CD4-positive, alpha-beta T cell (primary cell): ENCODE measurements at regions of chr19 and their contacts with region 1.

Region 1: DNA sequence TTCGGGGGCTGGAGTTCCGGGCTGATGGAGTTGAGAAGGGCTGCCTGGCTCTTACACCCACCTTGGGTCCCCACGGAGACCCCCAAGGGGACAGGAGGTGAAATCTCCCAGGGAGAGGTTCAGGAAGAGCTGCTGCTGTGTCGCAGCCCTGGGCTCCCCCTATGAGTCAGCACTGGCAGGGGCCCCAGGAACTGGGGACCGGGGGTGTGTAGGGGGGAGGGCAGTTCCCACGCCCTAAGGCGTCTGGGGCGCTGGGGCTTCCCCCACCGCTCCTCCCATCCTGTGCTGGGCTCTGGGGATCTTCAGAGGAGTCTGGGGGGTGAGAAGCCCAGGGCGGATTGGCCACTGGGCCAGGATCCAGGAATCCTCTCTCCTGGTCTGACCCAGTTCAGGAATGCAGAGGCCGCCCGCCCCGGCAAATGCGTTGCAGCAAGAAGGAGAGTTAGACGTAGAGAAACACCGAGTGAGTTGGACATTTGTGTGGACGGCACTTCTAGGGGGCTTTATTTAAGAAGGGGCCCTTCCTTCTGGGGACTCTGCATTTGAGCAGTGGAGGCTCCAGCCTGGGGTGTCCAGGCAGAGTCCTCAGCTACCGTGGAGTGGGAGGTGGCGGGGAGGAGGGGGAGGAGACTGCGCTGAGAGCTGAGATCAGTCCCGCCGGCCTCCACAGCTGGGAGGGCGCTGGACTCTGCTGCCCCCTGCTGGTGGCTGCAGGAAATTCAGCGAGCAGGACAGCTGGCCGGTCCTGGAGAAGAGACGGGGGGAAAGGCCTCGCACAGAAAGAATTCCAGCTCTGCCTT is 15.0 kb upstream of the NANOS3 start:
- DNase-seq: peak; percentile 81 to 96 (median 86)
- ATAC-seq: peak; percentile 84
- H3K4me3 ChIP-seq: peak overlapping the region; percentile 73
- H3K4me3 Mint-ChIP-seq: peak overlapping the region; percentile 94
- H3K27ac ChIP-seq: peak overlapping the region; percentile 84 to 94
- H3K27ac Mint-ChIP-seq: peak overlapping the region; percentile 86
- H3K4me1 ChIP-seq: peaks cover 42% of the 10 kb centered on the region
- H3K4me1 Mint-ChIP-seq: peaks cover 41% of the 10 kb centered on the region
- H3K27me3 ChIP-seq: peaks cover 22 to 25% of the 10 kb centered on the region in 2 experiments
- H3K27me3 Mint-ChIP-seq: peaks cover 30% of the 10 kb centered on the region
- CTCF ChIP-seq: peak; percentile 99

Region 2: DNA sequence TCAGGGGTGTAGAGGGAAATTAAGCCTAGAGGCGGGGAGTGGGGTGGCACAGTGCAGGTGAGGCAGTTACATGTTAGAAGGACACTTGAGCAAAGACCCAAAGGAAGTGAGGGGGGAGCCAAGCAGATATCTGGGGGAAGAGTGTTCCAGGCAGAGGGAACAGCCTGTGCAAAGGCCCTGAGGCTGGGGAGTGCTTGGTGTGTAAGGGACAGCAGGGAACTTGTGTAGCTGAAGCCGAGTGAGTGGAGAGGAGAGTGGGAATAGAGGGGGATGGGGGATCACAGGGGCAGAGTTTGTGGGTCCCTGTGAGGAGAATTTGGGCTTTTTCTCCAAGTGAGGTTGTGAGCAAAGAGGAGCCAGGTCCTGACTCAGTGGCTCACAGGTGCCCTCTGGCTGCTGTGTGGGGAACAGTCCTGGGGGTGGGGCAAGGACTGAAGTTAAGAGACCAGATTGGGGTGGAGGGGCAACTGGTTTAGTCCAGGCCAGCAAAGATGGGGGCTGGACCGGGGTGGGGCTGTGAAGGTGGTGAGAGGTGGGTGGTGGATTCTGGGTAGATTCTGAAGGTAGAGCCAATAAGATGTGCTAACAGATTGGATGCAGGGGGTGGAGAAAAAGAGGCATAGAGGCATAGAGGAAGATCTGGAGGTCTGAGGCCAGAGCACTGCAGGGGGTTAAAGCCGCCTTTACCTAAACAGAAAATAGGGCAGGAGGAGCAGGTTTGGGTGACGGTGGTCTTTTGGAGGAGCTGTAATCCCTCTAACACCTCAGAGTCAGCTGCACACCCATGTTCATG is 430.9 kb before region 1 on chr19:
- CTCF ChIA-PET with region 1: no interaction called
- POLR2A ChIA-PET with region 1: no interaction called
- intact Hi-C with region 1: loop called in 1 of 2 experiments (anchors 5 kb)
- DNase-seq: peak; percentile 11 to 67 (median 38)
- ATAC-seq: peak; percentile 48
- H3K4me3 ChIP-seq: no peak overlapping the region
- H3K4me3 Mint-ChIP-seq: no peak overlapping the region
- H3K27ac ChIP-seq: no peak overlapping the region
- H3K27ac Mint-ChIP-seq: no peak overlapping the region
- H3K4me1 ChIP-seq: no peaks in the 10 kb centered on the region
- H3K4me1 Mint-ChIP-seq: no peaks in the 10 kb centered on the region
- H3K27me3 ChIP-seq: peaks cover 5 to 8% of the 10 kb centered on the region in 2 experiments
- H3K27me3 Mint-ChIP-seq: peaks cover 27% of the 10 kb centered on the region
- CTCF ChIP-seq: peak; percentile 59

Region 3: GRCh38 chr19:13784731-13785452 is 77.0 kb before region 1 on chr19:
- CTCF ChIA-PET with region 1: interaction called, 78 read pairs
- POLR2A ChIA-PET with region 1: interaction called, 85 read pairs
- intact Hi-C with region 1: loop called (anchors 1 kb)
- DNase-seq: peak; percentile 54 to 86 (median 70)
- ATAC-seq: peak; percentile 63
- H3K4me3 ChIP-seq: peak overlapping the region; percentile 3
- H3K4me3 Mint-ChIP-seq: peak overlapping the region; percentile 71
- H3K27ac ChIP-seq: no peak overlapping the region
- H3K27ac Mint-ChIP-seq: peak overlapping the region; percentile 84
- H3K4me1 ChIP-seq: peaks cover 52% of the 10 kb centered on the region
- H3K4me1 Mint-ChIP-seq: peaks cover 27% of the 10 kb centered on the region
- H3K27me3 ChIP-seq: no peaks in the 10 kb centered on the region
- H3K27me3 Mint-ChIP-seq: no peaks in the 10 kb centered on the region
- CTCF ChIP-seq: peak; percentile 86

Region 4: DNA sequence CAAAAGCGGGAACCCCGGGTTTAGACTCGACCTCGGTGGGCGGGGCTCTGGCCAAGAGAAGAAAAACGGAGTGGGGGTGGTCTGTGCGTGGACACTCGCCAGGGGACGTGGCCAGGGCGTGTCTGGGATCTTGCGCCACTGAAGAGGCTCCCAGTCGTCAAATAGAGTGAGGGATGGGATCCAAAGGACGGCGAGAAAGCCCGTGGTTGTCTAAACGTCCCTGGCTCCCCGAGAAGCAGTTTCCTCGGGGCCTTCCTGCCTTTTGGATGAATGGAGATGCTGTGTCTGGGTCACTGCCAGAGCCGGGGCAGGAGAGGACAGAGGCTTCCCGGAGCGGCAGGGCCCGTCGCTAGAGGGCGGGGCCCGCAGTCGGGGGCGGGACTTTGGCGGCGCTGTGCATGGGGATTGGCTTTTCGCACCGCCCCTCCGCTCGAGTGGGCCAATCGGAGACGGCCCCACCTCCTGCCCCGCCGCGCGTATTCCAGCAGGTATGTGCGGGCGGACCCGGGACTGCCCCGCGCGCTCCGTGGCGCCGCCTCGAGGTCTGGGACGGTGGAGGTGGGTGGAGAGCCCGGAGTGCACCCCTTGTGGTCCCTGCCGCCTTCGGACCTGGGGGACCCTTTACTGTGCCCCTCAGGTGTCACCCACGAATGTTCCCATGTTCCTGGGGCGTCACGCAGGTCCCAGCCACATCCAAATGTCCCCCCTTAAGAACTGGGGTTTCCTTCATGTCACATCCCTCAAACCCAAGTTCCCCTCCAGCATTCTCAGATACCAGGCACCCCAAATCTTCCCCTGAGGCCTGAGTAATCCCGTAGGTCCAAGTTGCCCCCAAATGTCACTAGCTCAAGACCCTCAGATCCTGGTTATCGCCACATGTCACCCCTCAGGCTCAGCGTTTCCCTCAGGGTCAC is 28.3 kb before region 1 on chr19:
- CTCF ChIA-PET with region 1: interaction called, 44 read pairs
- POLR2A ChIA-PET with region 1: interaction called, 22 read pairs
- intact Hi-C with region 1: loop called in 1 of 2 experiments (anchors 2 kb)
- DNase-seq: peak; percentile 82 to 97 (median 92)
- ATAC-seq: peak; percentile 84
- H3K4me3 ChIP-seq: peak overlapping the region; percentile 61
- H3K4me3 Mint-ChIP-seq: peak overlapping the region; percentile 89
- H3K27ac ChIP-seq: peak overlapping the region; percentile 62 to 76
- H3K27ac Mint-ChIP-seq: peak overlapping the region; percentile 99
- H3K4me1 ChIP-seq: peaks cover 57% of the 10 kb centered on the region
- H3K4me1 Mint-ChIP-seq: peaks cover 38% of the 10 kb centered on the region
- H3K27me3 ChIP-seq: no peaks in the 10 kb centered on the region
- H3K27me3 Mint-ChIP-seq: no peaks in the 10 kb centered on the region
- CTCF ChIP-seq: peak; percentile 18

Region 5: GRCh38 chr19:13846557-13847406 is 15.2 kb before region 1 on chr19:
- CTCF ChIA-PET with region 1: interaction called, 46 read pairs
- POLR2A ChIA-PET with region 1: interaction called, 31 read pairs
- intact Hi-C with region 1: loop called in 1 of 2 experiments (anchors 1 kb)
- DNase-seq: peak; percentile 86 to 99 (median 96)
- ATAC-seq: peak; percentile 61
- H3K4me3 ChIP-seq: peak overlapping the region; percentile 76
- H3K4me3 Mint-ChIP-seq: peak overlapping the region; percentile 86
- H3K27ac ChIP-seq: peak overlapping the region; percentile 100
- H3K27ac Mint-ChIP-seq: peak overlapping the region; percentile 99
- H3K4me1 ChIP-seq: peaks cover 86% of the 10 kb centered on the region
- H3K4me1 Mint-ChIP-seq: peaks cover 63% of the 10 kb centered on the region
- H3K27me3 ChIP-seq: no peaks in the 10 kb centered on the region
- H3K27me3 Mint-ChIP-seq: no peaks in the 10 kb centered on the region
- CTCF ChIP-seq: no peak

Region 6: GRCh38 chr19:14142262-14143190 is 280.6 kb after region 1 on chr19:
- CTCF ChIA-PET with region 1: no interaction called
- POLR2A ChIA-PET with region 1: no interaction called
- intact Hi-C with region 1: no loop called
- DNase-seq: no peak
- ATAC-seq: no peak
- H3K4me3 ChIP-seq: no peak overlapping the region
- H3K4me3 Mint-ChIP-seq: peak overlapping the region; percentile 4
- H3K27ac ChIP-seq: no peak overlapping the region
- H3K27ac Mint-ChIP-seq: peak overlapping the region; percentile 66
- H3K4me1 ChIP-seq: peaks cover 18% of the 10 kb centered on the region
- H3K4me1 Mint-ChIP-seq: peaks cover 46% of the 10 kb centered on the region
- H3K27me3 ChIP-seq: no peaks in the 10 kb centered on the region
- H3K27me3 Mint-ChIP-seq: no peaks in the 10 kb centered on the region
- CTCF ChIP-seq: no peak